Lower leg skin (tissue), 4 donors: ENCODE measurements at regions of chr19 and their contacts with region 1.

Region 1: DNA sequence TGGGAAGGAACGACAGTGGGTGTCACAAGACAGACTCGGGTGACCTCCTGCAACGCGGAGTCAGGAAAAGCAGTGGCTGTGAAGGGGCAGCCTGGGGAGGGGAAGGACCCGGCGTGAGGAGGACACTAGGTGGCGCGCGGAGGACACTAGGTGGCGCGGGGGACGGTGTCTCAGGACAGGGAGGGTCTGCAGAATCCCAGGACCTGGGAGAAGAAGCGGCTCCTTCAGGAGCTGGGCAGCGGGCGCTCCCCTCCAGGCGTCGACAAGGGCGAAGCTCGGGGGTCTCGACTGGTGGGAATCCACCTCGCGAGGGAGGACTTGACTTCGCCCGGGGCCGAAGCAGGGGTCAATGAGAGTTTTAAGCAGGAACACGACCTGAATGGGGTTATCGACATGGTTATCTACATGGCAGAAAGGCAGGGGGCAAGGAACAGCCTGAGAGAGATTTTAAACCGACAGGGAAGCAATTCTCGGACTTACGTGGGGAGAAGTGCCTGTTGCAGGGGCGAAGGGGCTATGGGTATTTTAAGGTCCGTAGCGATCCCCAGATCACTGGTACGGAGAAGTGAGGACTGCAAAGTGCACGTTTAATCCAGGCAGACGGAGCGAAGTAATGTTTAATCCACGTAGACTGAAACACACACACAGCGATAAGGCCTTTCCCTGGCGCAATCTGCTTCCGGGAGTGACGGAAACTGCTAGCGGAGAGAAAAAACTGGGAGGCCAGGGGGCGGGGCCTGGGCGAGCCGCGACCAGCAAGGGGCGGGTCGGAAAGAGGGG is at the start of gene ZNF616:
- DNase-seq: peak; percentile 96 to 97
- H3K4me3 ChIP-seq: peak within 1 kb of the TSS; percentile 89
- CTCF ChIP-seq: peak in 1 of 3 donors; percentile 32
- POLR2A ChIP-seq: peak in 1 of 2 donors; percentile 39
- total RNA-seq, gene ZNF616: 7.8 to 12.6 (median 9.8) TPM

Region 2: DNA sequence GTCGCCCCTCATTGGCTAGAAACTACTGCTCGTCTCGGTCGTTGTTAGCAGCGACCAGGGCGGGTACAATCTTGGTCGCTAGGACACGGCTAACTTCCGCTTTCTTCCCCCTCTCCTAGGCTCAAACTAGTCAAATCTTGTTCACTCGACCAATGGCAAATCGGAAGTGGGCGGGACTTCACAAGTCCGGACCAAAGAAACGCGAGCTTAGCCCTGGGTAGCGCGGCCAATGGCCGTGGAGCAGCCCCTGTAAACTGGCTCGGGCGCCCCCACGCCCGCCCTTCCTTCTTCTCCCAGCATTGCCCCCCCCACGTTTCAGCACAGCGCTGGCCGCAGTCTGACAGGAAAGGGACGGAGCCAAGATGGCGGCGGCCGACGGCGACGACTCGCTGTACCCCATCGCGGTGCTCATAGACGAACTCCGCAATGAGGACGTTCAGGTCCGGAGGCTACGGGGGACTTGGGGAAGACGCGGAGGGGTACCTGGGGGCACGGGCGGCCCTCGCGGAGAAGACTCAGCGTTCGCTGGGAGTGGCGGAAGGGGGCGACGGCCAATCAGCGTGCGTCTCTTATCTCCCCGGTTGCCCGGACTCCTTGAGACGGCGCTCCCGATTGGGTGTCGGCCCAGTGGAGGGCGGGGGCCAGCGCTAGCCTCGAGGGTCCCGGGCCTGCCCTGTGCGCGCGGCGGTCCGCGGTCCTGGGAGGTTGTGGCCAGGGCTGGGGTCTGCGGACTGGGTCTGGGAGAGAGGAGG is 50.5 kb after region 1 on chr19 and contains the start of gene PPP2R1A:
- intact Hi-C with region 1: loop called (anchors 5 kb)
- DNase-seq: peak; percentile 100
- H3K4me3 ChIP-seq: peak within 1 kb of the TSS; percentile 76
- CTCF ChIP-seq: no peak
- POLR2A ChIP-seq: peak in 1 of 2 donors; percentile 76
- total RNA-seq, gene PPP2R1A: 200 to 226 (median 224) TPM

Region 3: GRCh38 chr19:52237771-52238400 is 98.4 kb after region 1 on chr19:
- intact Hi-C with region 1: loop called (anchors 5 kb)
- DNase-seq: no peak
- H3K4me3 ChIP-seq: no peak overlapping the region
- CTCF ChIP-seq: peak in 1 of 3 donors; percentile 59
- POLR2A ChIP-seq: no peak